ENCODE measurements at regions of chr19 and their contacts with region 1.

Region 1: DNA sequence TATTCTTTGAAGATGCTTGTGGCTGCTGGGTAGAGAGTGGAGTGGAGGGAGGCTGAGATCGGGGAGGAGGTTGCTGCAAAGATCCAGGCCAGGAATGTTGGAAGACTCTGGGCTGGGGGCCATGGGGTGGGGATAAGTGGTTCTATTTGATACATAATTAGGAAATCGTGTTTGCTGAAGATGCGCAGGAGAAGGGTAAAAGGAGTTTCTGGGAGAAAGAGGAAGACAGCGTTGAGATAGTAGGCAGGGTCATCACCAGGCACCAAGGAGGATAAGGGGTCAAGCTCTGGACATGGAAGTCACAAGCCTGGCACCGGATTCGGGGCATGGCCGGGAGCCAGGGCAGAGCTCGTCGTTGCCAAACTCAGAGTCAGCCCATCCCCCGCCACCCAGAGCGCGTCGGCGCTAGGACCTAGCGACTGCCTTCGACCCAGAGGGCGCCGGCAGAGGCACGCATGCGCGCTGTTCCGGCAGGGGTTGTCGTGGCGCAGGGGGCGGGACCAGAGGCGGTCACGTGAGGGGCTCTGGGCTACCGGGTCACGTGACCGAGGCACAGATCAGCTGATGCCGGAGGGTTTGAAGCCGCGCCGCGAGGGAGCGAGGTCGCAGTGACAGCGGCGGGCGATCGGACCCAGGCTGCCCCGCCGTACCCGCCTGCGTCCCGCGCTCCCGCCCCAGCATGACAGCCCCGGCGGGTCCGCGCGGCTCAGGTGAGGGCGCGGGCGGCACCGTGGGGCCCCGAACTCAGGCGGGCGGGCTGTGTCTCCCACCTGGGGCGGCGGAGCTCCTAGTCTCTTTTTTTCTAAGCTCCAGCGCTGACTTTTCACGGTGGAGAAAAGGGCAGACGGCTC is at the start of gene MCOLN1:
- DNase-seq: peak; percentile 96 to 99 (median 98)
- H3K4me3 ChIP-seq: peak within 1 kb of the TSS; percentile 65 to 98 (median 88)
- H3K27ac ChIP-seq: peak within 1 kb of the TSS; percentile 30 to 96 (median 89)
- H3K27me3 ChIP-seq: no peaks in the 10 kb centered on the region
- CTCF ChIP-seq: peak in 34 of 56 donors; percentile 9 to 60 (median 26)
- total RNA-seq, gene MCOLN1: 21.1 to 64.6 (median 33.5) TPM

Region 2: GRCh38 chr19:7386308-7386707 is 136.0 kb before region 1 on chr19:
- intact Hi-C with region 1: no loop called
- DNase-seq: no peak
- H3K4me3 ChIP-seq: no peak overlapping the region
- H3K27ac ChIP-seq: no peak overlapping the region
- H3K27me3 ChIP-seq: no peaks in the 10 kb centered on the region
- CTCF ChIP-seq: peak in 1 of 56 donors; percentile 10

Region 3: GRCh38 chr19:7488736-7489353 is 33.5 kb before region 1 on chr19 and contains the start of gene PEX11G:
- intact Hi-C with region 1: loop called (anchors 2 kb)
- DNase-seq: peak; percentile 83 to 95 (median 89)
- H3K4me3 ChIP-seq: peak within 1 kb of the TSS; percentile 41 to 96 (median 74)
- H3K27ac ChIP-seq: peak within 1 kb of the TSS; percentile 77 to 98 (median 94)
- H3K27me3 ChIP-seq: no peaks in the 10 kb centered on the region
- CTCF ChIP-seq: peak in 10 of 56 donors; percentile 9 to 49 (median 25)
- total RNA-seq, gene PEX11G: 0.77 to 8.8 (median 3.2) TPM

Region 4: DNA sequence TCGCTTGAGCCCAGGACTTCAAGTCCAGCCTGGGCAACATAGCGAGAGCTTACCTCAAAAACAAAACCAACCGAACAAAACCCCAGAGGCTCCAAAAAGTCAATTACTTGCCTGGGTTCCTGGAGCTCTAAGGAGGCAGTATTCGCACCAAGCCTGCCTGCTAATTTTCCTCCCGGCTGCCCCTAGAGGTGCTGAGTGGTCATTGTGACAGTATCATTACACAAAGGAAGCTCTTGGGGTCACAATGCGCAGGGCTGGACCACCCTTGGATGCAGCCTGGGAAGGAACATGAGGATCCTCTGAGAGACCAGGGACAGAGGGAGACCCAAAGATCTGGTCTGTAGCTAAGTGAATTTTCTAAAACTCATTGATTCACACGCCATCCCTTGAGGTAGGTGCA is 25.0 kb before region 1 on chr19:
- intact Hi-C with region 1: loop called (anchors 2 kb)
- DNase-seq: peak in 1 of 10 donors; percentile 29
- H3K4me3 ChIP-seq: no peak overlapping the region
- H3K27ac ChIP-seq: peak overlapping the region in 50 of 59 donors; percentile 0 to 100 (median 91)
- H3K27me3 ChIP-seq: no peaks in the 10 kb centered on the region
- CTCF ChIP-seq: peak in 39 of 56 donors; percentile 17 to 61 (median 38)

Region 5: GRCh38 chr19:7535035-7535992 is 13.0 kb after region 1 on chr19 and contains the start of gene PNPLA6:
- intact Hi-C with region 1: loop called (anchors 1 kb)
- DNase-seq: peak; percentile 94 to 99 (median 97)
- H3K4me3 ChIP-seq: peak within 1 kb of the TSS; percentile 69 to 99 (median 94)
- H3K27ac ChIP-seq: peak within 1 kb of the TSS; percentile 79 to 100 (median 97)
- H3K27me3 ChIP-seq: no peaks in the 10 kb centered on the region
- CTCF ChIP-seq: peak in 28 of 56 donors; percentile 0 to 49 (median 26)
- total RNA-seq, gene PNPLA6: 131 to 340 (median 192) TPM

Region 6: GRCh38 chr19:7629347-7630054 is 107.2 kb after region 1 on chr19 and contains the starts of genes PET100 and XAB2:
- intact Hi-C with region 1: no loop called
- DNase-seq: peak; percentile 95 to 99 (median 98)
- H3K4me3 ChIP-seq: peak within 1 kb of the TSS; percentile 71 to 100 (median 92)
- H3K27ac ChIP-seq: peak within 1 kb of the TSS in 49 of 59 donors; percentile 15 to 90 (median 72)
- H3K27me3 ChIP-seq: no peaks in the 10 kb centered on the region
- CTCF ChIP-seq: peak in 17 of 56 donors; percentile 8 to 56 (median 25)
- total RNA-seq, gene PET100: 33.4 to 159 (median 92.2) TPM
- total RNA-seq, gene XAB2: 30.8 to 56.2 (median 38.7) TPM

Measured in dorsolateral prefrontal cortex (tissue), 120 donors.